Vagina (tissue), 2 donors: ENCODE measurements at regions of chr10 and their contacts with region 1.

Region 1: GRCh38 chr10:58268870-58269605 is at the start of gene CISD1:
- DNase-seq: peak; percentile 99
- H3K4me3 ChIP-seq: peak within 1 kb of the TSS; percentile 60 to 93
- H3K27ac ChIP-seq: peak within 1 kb of the TSS; percentile 98
- H3K4me1 ChIP-seq: peaks cover 30% of the 10 kb centered on the region
- H3K27me3 ChIP-seq: no peaks in the 10 kb centered on the region
- CTCF ChIP-seq: no peak
- POLR2A ChIP-seq: peak in 1 of 2 donors; percentile 52
- total RNA-seq, gene CISD1: 16.0 TPM

Region 2: GRCh38 chr10:58334817-58335305 is 65.8 kb after region 1 on chr10 and contains the start of gene UBE2D1:
- intact Hi-C with region 1: loop called (anchors 2 kb)
- DNase-seq: no peak
- H3K4me3 ChIP-seq: peak within 1 kb of the TSS; percentile 86 to 97
- H3K27ac ChIP-seq: peak within 1 kb of the TSS; percentile 76
- H3K4me1 ChIP-seq: peaks cover 20% of the 10 kb centered on the region
- H3K27me3 ChIP-seq: no peaks in the 10 kb centered on the region
- CTCF ChIP-seq: peak in 1 of 3 experiments; percentile 12
- POLR2A ChIP-seq: peak in 1 of 2 donors; percentile 77
- total RNA-seq, gene UBE2D1: 10.1 TPM